CD8-positive, alpha-beta memory T cell (primary cell): ENCODE measurements at regions of chr19 and their contacts with region 1.

Region 1: DNA sequence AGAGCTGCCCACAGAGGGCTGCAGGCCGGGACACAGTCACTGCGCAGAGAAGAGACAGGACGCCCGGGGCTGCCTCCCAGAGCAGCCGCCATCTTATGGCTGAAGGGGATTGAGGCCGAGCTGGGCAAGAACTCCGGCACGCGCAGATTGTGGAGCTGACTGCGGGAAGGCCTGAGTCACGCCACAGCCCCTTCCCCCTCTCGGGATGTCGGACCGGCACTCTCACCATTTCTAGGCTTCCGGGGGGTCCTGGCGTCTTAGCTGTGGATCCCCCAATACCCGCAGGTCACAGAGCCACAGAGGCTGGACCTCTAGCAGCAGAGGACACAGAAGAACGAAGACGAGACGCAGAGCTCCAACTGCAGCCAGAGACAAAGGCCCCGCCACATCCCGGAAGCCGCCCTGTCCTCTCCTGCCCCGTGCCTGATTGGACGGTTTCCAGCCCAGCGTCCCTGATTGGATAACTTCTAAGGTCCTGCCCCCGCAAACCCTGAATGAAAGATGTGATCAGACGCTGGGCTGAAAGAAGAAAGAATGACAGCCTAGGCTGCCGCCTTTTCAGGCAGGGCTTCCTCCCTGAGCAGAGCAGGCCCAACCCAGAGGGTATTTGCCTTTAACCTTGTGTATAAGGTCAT is at the start of gene ZNF43:
- DNase-seq: peak; percentile 87 to 95 (median 91)
- H3K4me3 ChIP-seq: peak within 1 kb of the TSS; percentile 91
- H3K4me3 Mint-ChIP-seq: peak within 1 kb of the TSS; percentile 95 to 100 (median 98)
- H3K27ac ChIP-seq: peak within 1 kb of the TSS; percentile 80
- H3K27ac Mint-ChIP-seq: peak within 1 kb of the TSS; percentile 94 to 99 (median 98)
- H3K4me1 ChIP-seq: peaks cover 7% of the 10 kb centered on the region
- H3K4me1 Mint-ChIP-seq: peaks cover 28 to 48% (median 43%) of the 10 kb centered on the region in 3 donors
- H3K27me3 ChIP-seq: no peaks in the 10 kb centered on the region
- H3K27me3 Mint-ChIP-seq: no peaks in the 10 kb centered on the region
- total RNA-seq, gene ZNF43: 22.7 to 25.2 TPM

Region 2: GRCh38 chr19:21767065-21767800 is 68.7 kb before region 1 on chr19 and contains the start of gene ZNF100:
- CTCF ChIA-PET with region 1: interaction called, 3 read pairs
- POLR2A ChIA-PET with region 1: interaction called, 16 read pairs
- DNase-seq: peak; percentile 77 to 90 (median 82)
- H3K4me3 ChIP-seq: peak within 1 kb of the TSS; percentile 94
- H3K4me3 Mint-ChIP-seq: peak within 1 kb of the TSS; percentile 93 to 99 (median 98)
- H3K27ac ChIP-seq: peak within 1 kb of the TSS; percentile 87
- H3K27ac Mint-ChIP-seq: peak within 1 kb of the TSS; percentile 53 to 97 (median 93)
- H3K4me1 ChIP-seq: peaks cover 13% of the 10 kb centered on the region
- H3K4me1 Mint-ChIP-seq: peaks cover 22 to 43% (median 28%) of the 10 kb centered on the region in 3 donors
- H3K27me3 ChIP-seq: no peaks in the 10 kb centered on the region
- H3K27me3 Mint-ChIP-seq: peaks cover 0 to 2% of the 10 kb centered on the region in 2 donors
- total RNA-seq, gene ZNF100: 18.3 to 19.2 TPM

Region 3: GRCh38 chr19:21812450-21812849 is 23.5 kb before region 1 on chr19:
- CTCF ChIA-PET with region 1: no interaction called
- POLR2A ChIA-PET with region 1: no interaction called
- DNase-seq: no peak
- H3K4me3 ChIP-seq: no peak overlapping the region
- H3K4me3 Mint-ChIP-seq: no peak overlapping the region
- H3K27ac ChIP-seq: no peak overlapping the region
- H3K27ac Mint-ChIP-seq: no peak overlapping the region
- H3K4me1 ChIP-seq: no peaks in the 10 kb centered on the region
- H3K4me1 Mint-ChIP-seq: no peaks in the 10 kb centered on the region
- H3K27me3 ChIP-seq: no peaks in the 10 kb centered on the region
- H3K27me3 Mint-ChIP-seq: no peaks in the 10 kb centered on the region

Region 4: DNA sequence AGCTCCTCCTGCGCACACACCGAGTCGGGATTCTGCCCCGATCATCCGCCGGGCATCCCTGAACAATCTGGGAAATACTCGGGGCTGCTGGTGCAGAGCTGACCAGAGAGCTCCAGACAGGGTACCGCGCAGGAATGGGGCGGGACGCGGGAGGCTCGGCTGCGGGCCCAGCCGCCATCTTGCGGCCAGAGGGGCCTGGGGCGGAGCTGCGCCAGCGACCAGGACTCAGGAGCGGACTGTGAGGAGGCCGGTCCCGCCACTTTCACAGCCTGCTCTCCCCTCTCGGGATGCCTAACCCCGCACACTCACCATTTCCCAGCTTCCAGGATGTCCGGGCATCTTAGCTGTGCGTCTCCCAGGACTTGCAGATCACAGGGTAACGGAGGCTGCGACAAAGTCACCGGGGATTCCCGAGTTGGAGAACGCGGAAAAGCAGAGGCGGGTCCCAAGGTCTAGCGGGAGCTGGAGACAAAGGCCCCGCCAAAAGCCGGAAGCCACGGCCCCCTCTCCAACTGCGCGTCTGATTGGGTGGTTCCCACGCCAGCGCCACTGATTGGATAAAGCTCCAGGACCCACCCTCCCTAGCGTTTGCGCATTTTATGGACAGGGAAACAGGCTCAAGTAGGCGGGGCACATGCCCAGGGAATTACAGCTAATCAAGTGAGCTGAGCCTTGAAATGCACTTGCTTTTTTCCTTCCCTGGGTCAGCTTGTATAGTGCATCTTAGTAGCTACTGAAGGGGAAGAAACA is 15.8 kb after region 1 on chr19:
- CTCF ChIA-PET with region 1: interaction called, 12 read pairs
- POLR2A ChIA-PET with region 1: interaction called, 32 read pairs
- DNase-seq: peak; percentile 85 to 92 (median 89)
- H3K4me3 ChIP-seq: peak overlapping the region; percentile 99
- H3K4me3 Mint-ChIP-seq: peak overlapping the region; percentile 91 to 98 (median 94)
- H3K27ac ChIP-seq: peak overlapping the region; percentile 80
- H3K27ac Mint-ChIP-seq: peak overlapping the region; percentile 80 to 99 (median 93)
- H3K4me1 ChIP-seq: peaks cover 6% of the 10 kb centered on the region
- H3K4me1 Mint-ChIP-seq: peaks cover 23 to 30% (median 23%) of the 10 kb centered on the region in 3 donors
- H3K27me3 ChIP-seq: no peaks in the 10 kb centered on the region
- H3K27me3 Mint-ChIP-seq: peaks cover 1 to 3% of the 10 kb centered on the region in 2 donors

Region 5: GRCh38 chr19:21878646-21879045 is 42.7 kb after region 1 on chr19:
- CTCF ChIA-PET with region 1: no interaction called
- POLR2A ChIA-PET with region 1: no interaction called
- DNase-seq: no peak
- H3K4me3 ChIP-seq: no peak overlapping the region
- H3K4me3 Mint-ChIP-seq: no peak overlapping the region
- H3K27ac ChIP-seq: no peak overlapping the region
- H3K27ac Mint-ChIP-seq: peak overlapping the region in 1 of 8 donors; percentile 29
- H3K4me1 ChIP-seq: no peaks in the 10 kb centered on the region
- H3K4me1 Mint-ChIP-seq: no peaks in the 10 kb centered on the region
- H3K27me3 ChIP-seq: no peaks in the 10 kb centered on the region
- H3K27me3 Mint-ChIP-seq: peaks cover 1 to 5% of the 10 kb centered on the region in 2 donors